ENCODE measurements at regions of chr15 and their contacts with region 1.

Region 1: GRCh38 chr15:85571780-85572179 is 191.4 kb downstream of the AKAP13 start:
- DNase-seq: no peak
- H3K4me3 ChIP-seq: no peak overlapping the region
- H3K4me3 Mint-ChIP-seq: no peak overlapping the region
- H3K27ac Mint-ChIP-seq: peak overlapping the region; percentile 34
- H3K4me1 ChIP-seq: peaks cover 12% of the 10 kb centered on the region
- H3K4me1 Mint-ChIP-seq: peaks cover 35% of the 10 kb centered on the region
- H3K27me3 ChIP-seq: no peaks in the 10 kb centered on the region
- H3K27me3 Mint-ChIP-seq: no peaks in the 10 kb centered on the region
- CTCF ChIP-seq: no peak

Region 2: DNA sequence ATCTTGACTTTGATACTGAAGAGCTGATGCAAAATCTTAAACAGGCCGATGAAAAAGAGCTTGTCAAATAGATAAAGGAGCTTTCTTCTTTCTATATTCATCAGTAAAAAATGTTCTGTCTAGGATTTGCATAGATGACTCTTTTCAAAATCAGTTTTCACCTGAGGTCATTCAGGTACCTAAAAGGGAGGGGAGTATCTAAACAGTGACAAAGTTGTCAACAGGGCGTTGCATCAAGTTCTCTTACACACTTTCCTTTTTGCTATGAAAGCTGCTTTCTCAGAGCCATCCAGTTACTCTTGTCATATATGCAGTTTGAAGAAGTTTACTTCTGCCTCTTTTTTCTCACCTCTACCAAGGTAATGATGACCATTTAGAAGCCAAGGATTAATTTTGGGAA is 131.3 kb before region 1 on chr15:
- CTCF ChIA-PET with region 1: no interaction called
- POLR2A ChIA-PET with region 1: no interaction called
- intact Hi-C with region 1: no loop called
- DNase-seq: no peak
- H3K4me3 ChIP-seq: no peak overlapping the region
- H3K4me3 Mint-ChIP-seq: no peak overlapping the region
- H3K27ac Mint-ChIP-seq: no peak overlapping the region
- H3K4me1 ChIP-seq: peaks cover 28% of the 10 kb centered on the region
- H3K4me1 Mint-ChIP-seq: peaks cover 30% of the 10 kb centered on the region
- H3K27me3 ChIP-seq: no peaks in the 10 kb centered on the region
- H3K27me3 Mint-ChIP-seq: no peaks in the 10 kb centered on the region
- CTCF ChIP-seq: no peak

Region 3: DNA sequence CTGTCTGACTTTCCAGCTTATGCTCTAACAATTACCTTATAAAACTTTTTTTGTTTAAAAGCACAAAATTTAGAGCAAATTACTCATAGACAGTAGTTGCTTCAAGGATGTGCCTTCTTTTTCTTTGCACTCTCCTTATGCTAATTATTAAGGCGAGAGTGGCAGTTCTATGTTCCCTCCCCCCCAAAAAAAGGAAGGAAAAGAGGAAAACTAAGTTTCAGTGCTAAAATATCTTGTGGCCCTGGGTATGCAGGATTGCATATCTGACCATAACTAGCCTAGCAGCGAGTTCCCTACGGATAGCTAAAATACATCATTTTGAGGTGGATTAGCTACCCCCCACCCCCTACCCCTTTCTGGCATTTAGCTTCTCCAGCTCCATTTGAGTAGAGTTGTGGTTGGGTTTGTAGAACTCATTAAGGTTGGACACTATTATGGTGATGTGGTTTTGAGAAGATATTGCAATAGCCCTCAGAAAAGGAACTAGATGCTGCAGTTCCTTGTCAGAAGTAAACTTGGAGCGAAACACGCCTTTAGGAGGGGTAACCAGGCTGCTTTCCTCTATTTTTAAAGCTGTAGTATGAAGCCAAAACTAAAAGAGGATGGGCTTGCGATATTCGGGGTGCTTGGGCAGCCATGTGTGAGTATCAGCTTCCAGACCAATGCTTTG is 16.8 kb before region 1 on chr15:
- CTCF ChIA-PET with region 1: no interaction called
- POLR2A ChIA-PET with region 1: no interaction called
- intact Hi-C with region 1: loop called (anchors 1 kb)
- DNase-seq: no peak
- H3K4me3 ChIP-seq: no peak overlapping the region
- H3K4me3 Mint-ChIP-seq: no peak overlapping the region
- H3K27ac Mint-ChIP-seq: no peak overlapping the region
- H3K4me1 ChIP-seq: peaks cover 17% of the 10 kb centered on the region
- H3K4me1 Mint-ChIP-seq: peaks cover 25% of the 10 kb centered on the region
- H3K27me3 ChIP-seq: no peaks in the 10 kb centered on the region
- H3K27me3 Mint-ChIP-seq: no peaks in the 10 kb centered on the region
- CTCF ChIP-seq: no peak